HCT116 (cell line): ENCODE measurements at regions of chr16 and their contacts with region 1.

Region 1: GRCh38 chr16:6969594-6969993 is 363.1 kb upstream of the RBFOX1 start:
- DNase-seq: no peak
- ATAC-seq: no peak
- H3K4me3 ChIP-seq: no peak overlapping the region
- H3K27ac ChIP-seq: no peak overlapping the region
- H3K4me1 ChIP-seq: no peaks in the 10 kb centered on the region
- H3K27me3 ChIP-seq: no peaks in the 10 kb centered on the region
- CTCF ChIP-seq: no peak
- POLR2A ChIP-seq: no peak
- RAD21 ChIP-seq: no peak

Region 2: DNA sequence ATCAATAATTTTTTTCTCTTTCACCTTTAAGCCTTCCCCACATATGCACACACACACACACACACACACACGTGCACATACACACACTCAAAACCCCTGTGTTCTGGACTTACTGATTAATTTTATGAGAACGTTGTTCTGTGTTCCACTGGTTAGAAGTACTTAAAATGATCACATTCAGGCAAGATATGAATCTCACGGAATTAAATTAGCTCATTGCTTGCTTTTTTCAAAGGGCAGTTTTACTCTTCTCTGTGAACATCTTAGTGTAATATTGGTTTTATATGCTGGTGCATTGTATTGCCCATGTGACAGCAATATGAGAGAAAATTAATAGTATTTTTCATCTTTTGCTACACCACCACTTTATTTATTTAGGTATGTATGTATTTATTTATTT is 14.3 kb before region 1 on chr16:
- CTCF ChIA-PET with region 1: no interaction called
- POLR2A ChIA-PET with region 1: no interaction called
- RAD21 ChIA-PET with region 1: no interaction called
- intact Hi-C with region 1: loop called (anchors 1 kb)
- DNase-seq: no peak
- ATAC-seq: no peak
- H3K4me3 ChIP-seq: no peak overlapping the region
- H3K27ac ChIP-seq: no peak overlapping the region
- H3K4me1 ChIP-seq: no peaks in the 10 kb centered on the region
- H3K27me3 ChIP-seq: no peaks in the 10 kb centered on the region
- CTCF ChIP-seq: no peak
- POLR2A ChIP-seq: no peak
- RAD21 ChIP-seq: no peak

Region 3: GRCh38 chr16:7408700-7409365 is 439.2 kb after region 1 on chr16:
- CTCF ChIA-PET with region 1: no interaction called
- POLR2A ChIA-PET with region 1: no interaction called
- RAD21 ChIA-PET with region 1: no interaction called
- intact Hi-C with region 1: no loop called
- DNase-seq: no peak
- ATAC-seq: no peak
- H3K4me3 ChIP-seq: no peak overlapping the region
- H3K27ac ChIP-seq: no peak overlapping the region
- H3K4me1 ChIP-seq: no peaks in the 10 kb centered on the region
- H3K27me3 ChIP-seq: no peaks in the 10 kb centered on the region
- CTCF ChIP-seq: no peak
- POLR2A ChIP-seq: no peak
- RAD21 ChIP-seq: no peak